Natural killer cell (primary cell): ENCODE measurements at regions of chr9 and their contacts with region 1.

Region 1: DNA sequence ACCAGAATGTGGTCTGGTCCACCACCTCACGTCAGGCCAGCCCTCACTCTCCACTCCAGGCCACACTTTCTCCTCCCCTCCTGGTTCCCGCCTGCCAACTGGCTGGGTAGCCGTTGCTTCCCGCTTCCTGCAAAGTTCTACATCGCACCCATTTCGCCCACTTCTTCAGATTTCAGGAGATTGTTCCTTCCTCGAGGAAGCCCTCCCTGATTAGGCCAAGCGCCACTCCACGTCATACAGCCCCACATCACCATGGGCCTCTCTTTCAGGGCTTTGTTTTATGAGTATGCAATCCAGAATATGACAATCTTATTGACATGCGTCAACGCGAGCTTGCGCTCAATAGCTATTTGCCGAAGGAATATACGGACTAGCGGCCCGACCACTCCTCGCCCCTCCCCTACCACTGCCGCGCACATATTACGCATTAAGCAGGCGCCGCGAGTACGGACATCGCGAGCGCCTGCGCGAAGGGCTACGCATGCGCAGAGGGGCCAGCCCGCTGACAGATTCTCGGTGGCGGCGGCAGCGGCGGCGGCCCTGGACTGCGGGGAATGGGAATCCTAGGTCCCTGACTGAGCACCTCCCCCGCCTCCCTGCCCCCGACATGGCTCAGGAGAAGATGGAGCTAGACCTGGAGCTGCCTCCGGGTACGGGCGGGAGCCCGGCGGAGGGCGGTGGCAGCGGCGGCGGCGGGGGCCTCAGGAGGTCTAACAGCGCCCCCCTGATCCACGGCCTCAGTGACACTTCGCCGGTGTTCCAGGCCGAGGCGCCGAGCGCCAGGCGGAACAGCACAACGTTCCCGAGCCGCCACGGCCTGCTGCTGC is 74.7 kb downstream of the PIP5K1B start:
- DNase-seq: peak; percentile 95 to 98
- ATAC-seq: peak; percentile 90 to 96 (median 92)
- H3K4me3 ChIP-seq: peak overlapping the region; percentile 75
- H3K4me3 Mint-ChIP-seq: no peak overlapping the region
- H3K27ac ChIP-seq: peak overlapping the region; percentile 97
- H3K27ac Mint-ChIP-seq: no peak overlapping the region
- H3K4me1 ChIP-seq: peaks cover 17% of the 10 kb centered on the region
- H3K4me1 Mint-ChIP-seq: peaks cover 0 to 4% of the 10 kb centered on the region in 2 donors
- H3K27me3 ChIP-seq: no peaks in the 10 kb centered on the region
- H3K27me3 Mint-ChIP-seq: peaks cover 3 to 6% of the 10 kb centered on the region in 2 donors
- CTCF ChIP-seq: peak; percentile 40

Region 2: GRCh38 chr9:68500457-68501381 is 279.1 kb before region 1 on chr9:
- intact Hi-C with region 1: no loop called
- DNase-seq: no peak
- ATAC-seq: no peak
- H3K4me3 ChIP-seq: no peak overlapping the region
- H3K4me3 Mint-ChIP-seq: no peak overlapping the region
- H3K27ac ChIP-seq: no peak overlapping the region
- H3K27ac Mint-ChIP-seq: no peak overlapping the region
- H3K4me1 ChIP-seq: peaks cover 3% of the 10 kb centered on the region
- H3K4me1 Mint-ChIP-seq: peaks cover 9 to 10% of the 10 kb centered on the region in 2 donors
- H3K27me3 ChIP-seq: no peaks in the 10 kb centered on the region
- H3K27me3 Mint-ChIP-seq: peaks cover 7 to 13% of the 10 kb centered on the region in 2 donors
- CTCF ChIP-seq: no peak

Region 3: GRCh38 chr9:68869022-68869421 is 89.3 kb after region 1 on chr9:
- intact Hi-C with region 1: no loop called
- DNase-seq: no peak
- ATAC-seq: no peak
- H3K4me3 ChIP-seq: no peak overlapping the region
- H3K4me3 Mint-ChIP-seq: no peak overlapping the region
- H3K27ac ChIP-seq: no peak overlapping the region
- H3K27ac Mint-ChIP-seq: no peak overlapping the region
- H3K4me1 ChIP-seq: no peaks in the 10 kb centered on the region
- H3K4me1 Mint-ChIP-seq: no peaks in the 10 kb centered on the region
- H3K27me3 ChIP-seq: no peaks in the 10 kb centered on the region
- H3K27me3 Mint-ChIP-seq: no peaks in the 10 kb centered on the region
- CTCF ChIP-seq: no peak

Region 4: GRCh38 chr9:69035438-69036308 is 255.9 kb after region 1 on chr9 and contains the start of gene FXN:
- intact Hi-C with region 1: loop called (anchors 10 kb)
- DNase-seq: peak; percentile 79 to 88
- ATAC-seq: peak; percentile 89 to 95 (median 89)
- H3K4me3 ChIP-seq: peak within 1 kb of the TSS; percentile 78
- H3K4me3 Mint-ChIP-seq: peak within 1 kb of the TSS; percentile 98
- H3K27ac ChIP-seq: peak within 1 kb of the TSS; percentile 34
- H3K27ac Mint-ChIP-seq: peak within 1 kb of the TSS; percentile 92 to 93
- H3K4me1 ChIP-seq: peaks cover 14% of the 10 kb centered on the region
- H3K4me1 Mint-ChIP-seq: peaks cover 10 to 15% of the 10 kb centered on the region in 2 donors
- H3K27me3 ChIP-seq: no peaks in the 10 kb centered on the region
- H3K27me3 Mint-ChIP-seq: no peaks in the 10 kb centered on the region
- CTCF ChIP-seq: peak; percentile 90
- total RNA-seq, gene FXN: 11.5 to 19.4 (median 18.9) TPM